AG04449 (cell line): ENCODE measurements at regions of chr3 and their contacts with region 1.

Region 1: GRCh38 chr3:47420511-47421484 is 40.0 kb downstream of the PTPN23 start:
- DNase-seq: peak; percentile 29
- H3K4me3 ChIP-seq: no peak overlapping the region
- CTCF ChIP-seq: peak; percentile 96

Region 2: DNA sequence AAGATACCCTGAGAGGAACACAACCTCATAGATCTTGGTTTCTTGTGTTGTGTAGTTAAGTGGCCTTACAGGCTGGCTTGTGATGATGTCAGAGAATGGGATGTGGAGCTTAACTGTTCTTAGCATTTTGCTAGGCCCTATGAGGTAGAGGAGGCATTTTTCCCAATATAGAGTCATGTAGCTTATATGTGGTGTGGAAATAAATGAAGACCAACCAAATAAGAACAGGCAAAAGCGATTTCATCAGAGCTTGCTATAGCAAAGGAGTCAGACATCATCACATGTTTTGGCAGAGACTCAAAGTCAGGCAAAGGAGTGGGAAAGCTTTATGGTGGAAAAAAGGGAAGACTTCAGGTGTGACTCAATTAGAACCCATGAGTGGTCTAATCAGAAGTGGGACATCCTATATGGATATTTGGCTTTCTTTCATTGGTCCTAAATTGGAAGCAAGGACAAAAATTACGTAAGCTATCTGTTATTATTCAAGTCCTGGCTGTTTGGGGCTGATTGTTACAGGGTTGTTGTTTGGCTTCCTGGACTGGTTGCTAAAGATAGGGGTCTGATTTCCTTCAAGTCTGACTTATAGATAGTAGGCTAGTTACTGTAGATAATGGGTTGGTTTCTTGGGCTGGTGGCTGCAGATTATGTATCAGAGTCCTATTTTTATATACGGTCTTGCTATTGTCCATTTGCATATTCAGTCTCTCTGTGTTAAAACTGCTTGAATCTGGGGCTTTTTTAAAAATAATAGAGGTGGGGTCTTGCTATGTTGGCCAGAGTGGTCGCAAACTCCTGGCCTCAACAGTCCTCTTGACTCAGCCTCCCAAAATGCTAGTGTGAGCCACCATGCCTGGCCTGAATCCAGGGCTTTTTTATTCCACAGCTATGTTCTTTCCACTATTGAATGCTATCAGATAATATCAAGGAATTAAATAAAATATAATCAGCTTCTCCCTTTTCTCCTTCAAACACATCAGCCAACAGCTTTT is 226.6 kb before region 1 on chr3:
- CTCF ChIA-PET with region 1: no interaction called
- POLR2A ChIA-PET with region 1: no interaction called
- DNase-seq: no peak
- H3K4me3 ChIP-seq: no peak overlapping the region
- CTCF ChIP-seq: no peak

Region 3: GRCh38 chr3:47204875-47205274 is 215.9 kb before region 1 on chr3:
- CTCF ChIA-PET with region 1: no interaction called
- POLR2A ChIA-PET with region 1: no interaction called
- DNase-seq: no peak
- H3K4me3 ChIP-seq: no peak overlapping the region
- CTCF ChIP-seq: no peak

Region 4: DNA sequence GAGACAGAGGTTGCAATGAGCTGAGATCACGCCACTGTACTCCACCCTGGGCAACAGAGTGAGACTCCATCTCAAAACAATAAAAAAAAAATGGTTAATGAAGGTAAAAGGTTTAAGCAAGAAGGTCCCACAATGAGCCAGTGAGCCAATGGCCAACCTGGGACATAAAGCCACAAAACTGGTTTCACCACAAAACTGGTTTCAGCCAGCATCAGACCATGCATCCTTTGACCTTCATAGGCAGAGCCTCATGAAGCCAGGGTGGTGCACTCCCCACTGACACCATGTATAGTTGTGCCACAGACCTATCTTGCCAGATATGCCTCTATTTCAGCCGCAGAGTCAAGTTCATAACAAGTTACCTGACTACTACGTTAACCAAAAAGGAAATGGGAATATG is 13.0 kb after region 1 on chr3:
- CTCF ChIA-PET with region 1: interaction called, 48 read pairs
- POLR2A ChIA-PET with region 1: no interaction called
- DNase-seq: no peak
- H3K4me3 ChIP-seq: no peak overlapping the region
- CTCF ChIP-seq: no peak

Region 5: DNA sequence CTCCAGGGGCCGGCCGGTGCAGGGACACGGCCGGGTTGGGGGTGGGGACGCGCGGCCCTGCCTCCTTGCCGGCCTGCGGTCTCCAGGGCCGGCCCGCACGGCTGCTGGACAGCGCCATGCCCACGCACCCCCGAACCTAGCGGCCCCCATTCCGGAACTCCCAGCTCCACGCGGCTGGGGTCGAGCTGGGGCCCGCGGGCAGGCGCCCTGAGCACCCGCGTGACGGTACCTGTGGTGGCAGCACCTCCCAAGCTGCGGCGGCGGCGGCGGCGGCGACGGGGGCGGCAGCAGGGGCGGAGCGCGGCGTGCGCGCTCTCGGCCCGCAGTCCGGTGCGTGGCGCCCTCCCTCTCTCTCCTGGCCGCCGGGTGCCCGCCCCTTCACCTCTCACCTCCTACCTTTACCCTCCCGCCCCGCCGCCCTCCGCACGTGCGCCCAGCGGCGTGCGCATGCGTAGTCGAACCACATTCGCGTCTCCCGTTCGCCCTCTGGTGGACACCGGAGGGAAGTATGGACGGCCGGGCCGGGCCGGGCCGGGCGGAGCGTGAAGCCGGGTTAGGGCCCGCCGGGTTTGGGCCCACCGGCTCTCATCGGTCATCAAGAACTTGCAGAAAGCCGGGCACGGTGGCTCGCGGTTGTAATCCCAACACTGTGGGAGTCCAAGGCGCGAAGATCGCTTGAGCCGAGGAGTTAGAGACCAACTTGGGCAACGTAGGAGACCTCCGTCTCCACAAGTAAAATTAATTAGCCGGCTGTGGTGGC is 55.0 kb after region 1 on chr3 and contains the start of gene SCAP:
- CTCF ChIA-PET with region 1: interaction called, 35 read pairs
- POLR2A ChIA-PET with region 1: interaction called, 5 read pairs
- DNase-seq: no peak
- H3K4me3 ChIP-seq: peak within 1 kb of the TSS; percentile 84
- CTCF ChIP-seq: peak; percentile 97

Region 6: DNA sequence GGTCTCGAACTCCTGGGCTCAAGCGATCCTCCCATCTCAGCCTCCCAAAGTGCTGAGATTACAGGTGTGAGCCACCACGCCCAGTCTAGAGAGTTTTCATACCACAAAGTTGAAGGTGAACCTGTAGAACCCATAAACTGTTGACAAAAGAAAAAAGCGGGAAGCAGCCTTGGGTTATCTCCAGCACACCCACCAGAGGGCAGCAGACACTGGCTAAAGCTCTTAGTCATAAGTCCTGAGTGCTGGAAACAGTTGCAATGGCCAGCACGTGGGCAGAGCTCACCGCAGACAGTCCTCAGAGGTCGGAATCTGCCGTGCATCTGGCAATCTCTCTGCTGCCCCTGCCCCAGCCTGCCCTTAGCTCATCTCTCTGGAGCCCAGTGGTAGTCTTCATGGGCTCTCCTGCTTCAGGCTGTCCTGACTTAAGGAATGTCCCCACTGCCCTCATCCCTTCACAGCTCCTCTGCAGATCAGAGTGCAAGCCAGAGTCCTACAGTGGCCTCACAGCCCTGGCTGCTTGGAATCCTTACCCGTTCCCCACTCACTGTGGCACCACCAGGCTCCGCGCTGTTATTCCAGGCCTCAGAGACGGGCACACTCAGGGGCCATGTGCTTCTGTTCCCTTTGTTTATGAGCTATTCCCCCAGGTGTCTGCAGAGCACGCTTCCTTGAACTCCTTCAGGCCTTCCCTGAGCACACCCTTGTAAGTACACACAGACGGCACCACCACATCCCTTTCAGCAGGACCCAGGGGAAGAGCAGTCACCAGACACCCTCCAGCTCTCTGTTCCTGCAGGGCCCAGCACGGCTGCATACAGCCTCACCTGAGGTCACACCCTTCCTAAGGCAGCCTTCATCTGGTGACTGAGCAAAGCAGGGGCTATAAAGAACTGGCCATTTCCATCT is 101.5 kb after region 1 on chr3:
- CTCF ChIA-PET with region 1: interaction called, 15 read pairs
- POLR2A ChIA-PET with region 1: no interaction called
- DNase-seq: peak; percentile 47
- H3K4me3 ChIP-seq: no peak overlapping the region
- CTCF ChIP-seq: peak; percentile 82